ENCODE measurements at regions of chr5 and their contacts with region 1.

Region 1: DNA sequence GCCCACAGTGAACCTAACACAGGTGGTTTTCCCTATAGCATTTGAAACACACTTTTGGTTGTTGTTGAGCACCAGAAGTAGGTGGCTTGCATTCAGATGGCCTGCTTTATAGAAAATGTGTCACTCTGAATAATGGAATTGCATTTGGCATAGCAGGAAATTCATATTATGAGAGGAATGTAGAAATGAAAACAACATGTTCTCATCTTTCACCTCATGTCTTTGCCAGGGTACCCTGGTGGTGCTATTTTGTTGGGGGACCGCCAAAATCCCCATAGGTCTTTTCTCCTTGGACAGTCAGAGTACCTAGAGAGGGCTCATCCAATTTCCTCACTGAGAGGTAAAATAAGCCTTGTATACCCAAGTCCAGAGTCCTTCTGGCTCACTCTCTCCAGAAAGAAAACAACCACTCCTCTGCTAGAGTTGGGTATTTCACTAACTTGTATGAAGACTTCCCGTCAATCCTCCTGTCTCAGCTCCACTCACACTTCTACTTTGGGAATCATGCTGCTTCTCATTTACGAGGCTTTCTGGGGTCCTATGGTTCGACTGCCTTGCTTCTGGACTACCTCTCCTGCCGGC is 67.4 kb downstream of the MRPS27 start:
- DNase-seq: no peak
- H3K4me3 ChIP-seq: no peak overlapping the region
- H3K27ac ChIP-seq: no peak overlapping the region
- H3K4me1 ChIP-seq: peaks cover 48% of the 10 kb centered on the region
- H3K27me3 ChIP-seq: no peaks in the 10 kb centered on the region
- CTCF ChIP-seq: no peak

Region 2: GRCh38 chr5:72552041-72552557 is 299.4 kb after region 1 on chr5:
- intact Hi-C with region 1: loop called (anchors 5 kb)
- DNase-seq: no peak
- H3K4me3 ChIP-seq: no peak overlapping the region
- H3K27ac ChIP-seq: no peak overlapping the region
- H3K4me1 ChIP-seq: peaks cover 22% of the 10 kb centered on the region
- H3K27me3 ChIP-seq: no peaks in the 10 kb centered on the region
- CTCF ChIP-seq: no peak